ENCODE measurements at regions of chr20 and their contacts with region 1.

Region 1: DNA sequence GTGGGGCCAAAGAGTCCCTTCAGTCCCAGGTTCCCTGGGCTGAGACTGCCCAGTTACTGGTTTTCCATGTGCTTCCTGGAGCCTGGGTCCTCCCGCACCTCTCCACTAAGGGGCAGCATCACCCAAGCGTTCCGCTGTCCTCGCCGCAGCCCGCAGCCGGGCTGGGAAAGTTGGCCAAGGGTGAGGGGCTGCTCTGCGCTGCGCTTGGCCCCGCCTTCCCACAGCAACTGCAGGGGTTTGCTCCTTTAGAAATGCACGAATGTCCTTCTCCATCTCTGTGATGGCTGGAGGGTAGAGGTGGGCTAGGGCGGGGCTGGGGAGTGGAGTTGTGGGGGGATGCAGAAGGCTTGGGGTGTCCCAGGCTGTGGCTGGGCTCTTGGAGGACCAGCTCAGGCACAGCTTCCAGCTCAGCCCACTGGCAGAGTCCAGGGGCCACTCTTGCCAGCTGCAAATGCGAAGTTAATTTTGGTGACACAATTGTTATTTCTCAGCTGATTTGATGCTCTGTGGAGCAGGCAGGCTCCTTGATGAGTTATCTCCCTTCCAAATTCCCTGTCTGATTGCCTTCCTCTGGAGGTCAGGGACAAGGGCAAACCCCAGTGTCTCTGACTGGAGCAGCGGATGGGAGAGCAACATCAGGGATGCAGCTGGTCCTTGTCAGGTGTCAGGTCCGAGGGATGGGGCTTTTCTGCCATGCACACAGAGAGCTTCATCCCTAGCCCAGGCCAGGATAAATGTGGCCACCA is 63.2 kb downstream of the NOL4L start:
- DNase-seq: peak; percentile 79
- CTCF ChIP-seq: peak; percentile 85

Region 2: GRCh38 chr20:32534661-32535240 is 12.8 kb after region 1 on chr20:
- CTCF ChIA-PET with region 1: interaction called, 20 read pairs
- POLR2A ChIA-PET with region 1: no interaction called
- DNase-seq: no peak
- CTCF ChIP-seq: no peak

Region 3: GRCh38 chr20:32626859-32627636 is 105.1 kb after region 1 on chr20:
- CTCF ChIA-PET with region 1: interaction called, 20 read pairs
- POLR2A ChIA-PET with region 1: no interaction called
- DNase-seq: no peak
- CTCF ChIP-seq: no peak

Region 4: DNA sequence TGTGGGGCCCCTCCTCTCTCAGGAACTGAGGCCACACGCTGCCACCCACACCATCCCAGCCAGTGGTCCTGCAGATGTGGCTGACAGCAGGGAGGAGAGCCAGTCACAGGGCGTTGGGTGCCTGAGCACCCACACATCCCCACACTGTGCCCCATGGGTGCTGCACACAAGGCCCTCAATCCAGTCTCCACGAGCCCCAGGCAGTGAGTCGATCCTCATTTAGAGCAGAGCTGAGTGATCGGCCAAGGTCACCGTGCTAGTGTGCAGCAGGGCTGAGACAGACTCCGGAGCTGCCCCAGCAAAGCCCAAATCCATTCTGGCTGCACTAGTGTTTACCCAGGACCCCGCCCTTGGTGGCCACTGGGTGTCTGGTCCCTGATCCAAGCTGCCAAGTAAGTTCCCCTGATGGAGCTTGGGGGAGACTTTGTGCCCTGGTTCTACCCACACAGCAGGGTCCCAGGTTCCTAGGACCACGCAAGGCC is 142.8 kb after region 1 on chr20:
- CTCF ChIA-PET with region 1: interaction called, 33 read pairs
- POLR2A ChIA-PET with region 1: no interaction called
- DNase-seq: no peak
- CTCF ChIP-seq: no peak

Measured in GM10248 (cell line).